ENCODE measurements at regions of chr17 and their contacts with region 1.

Region 1: DNA sequence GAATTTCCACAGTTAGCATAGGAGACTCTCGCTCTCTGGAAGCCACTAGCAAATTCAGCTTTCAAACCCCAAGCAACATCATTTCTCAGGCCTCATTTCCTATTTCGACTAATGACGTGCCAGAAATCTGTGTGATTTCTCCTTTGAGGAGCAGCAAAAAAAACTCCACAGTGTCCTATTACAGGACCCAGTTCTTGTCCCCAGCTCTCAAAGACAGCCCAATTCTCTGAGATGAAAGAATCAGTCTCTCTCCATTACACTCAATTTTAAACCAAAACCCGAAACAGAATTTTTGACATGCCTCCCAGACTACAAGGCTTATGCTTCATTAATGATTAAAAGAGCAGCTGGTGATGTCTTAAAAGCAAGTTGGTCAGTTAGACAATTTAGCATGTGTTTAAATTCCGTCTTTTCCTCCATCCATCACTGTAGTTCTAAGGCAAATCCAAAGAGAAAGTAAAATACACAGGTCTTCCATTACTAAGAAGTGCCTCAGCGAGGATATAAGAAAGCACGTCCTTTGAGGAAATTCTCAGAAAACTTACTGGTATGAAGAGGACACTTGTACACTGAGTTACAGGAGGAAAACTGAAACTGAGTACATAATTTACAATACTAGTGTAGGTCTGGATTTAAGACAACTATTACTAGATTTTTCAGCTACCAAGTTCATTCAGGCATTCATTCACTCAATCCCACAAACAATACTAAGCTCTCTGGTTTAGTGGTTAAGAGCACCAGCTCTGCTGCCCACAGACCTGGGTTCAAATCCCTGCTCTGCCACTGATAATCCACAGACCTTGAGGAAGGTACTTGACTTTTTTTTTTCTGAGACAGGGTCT is 12.5 kb downstream of the TOM1L2 start:
- DNase-seq: no peak
- ATAC-seq: no peak
- H3K4me3 Mint-ChIP-seq: peak overlapping the region; percentile 63
- H3K27ac Mint-ChIP-seq: peak overlapping the region; percentile 83
- H3K4me1 Mint-ChIP-seq: peaks cover 44% of the 10 kb centered on the region
- H3K27me3 Mint-ChIP-seq: no peaks in the 10 kb centered on the region
- CTCF ChIP-seq: no peak

Region 2: DNA sequence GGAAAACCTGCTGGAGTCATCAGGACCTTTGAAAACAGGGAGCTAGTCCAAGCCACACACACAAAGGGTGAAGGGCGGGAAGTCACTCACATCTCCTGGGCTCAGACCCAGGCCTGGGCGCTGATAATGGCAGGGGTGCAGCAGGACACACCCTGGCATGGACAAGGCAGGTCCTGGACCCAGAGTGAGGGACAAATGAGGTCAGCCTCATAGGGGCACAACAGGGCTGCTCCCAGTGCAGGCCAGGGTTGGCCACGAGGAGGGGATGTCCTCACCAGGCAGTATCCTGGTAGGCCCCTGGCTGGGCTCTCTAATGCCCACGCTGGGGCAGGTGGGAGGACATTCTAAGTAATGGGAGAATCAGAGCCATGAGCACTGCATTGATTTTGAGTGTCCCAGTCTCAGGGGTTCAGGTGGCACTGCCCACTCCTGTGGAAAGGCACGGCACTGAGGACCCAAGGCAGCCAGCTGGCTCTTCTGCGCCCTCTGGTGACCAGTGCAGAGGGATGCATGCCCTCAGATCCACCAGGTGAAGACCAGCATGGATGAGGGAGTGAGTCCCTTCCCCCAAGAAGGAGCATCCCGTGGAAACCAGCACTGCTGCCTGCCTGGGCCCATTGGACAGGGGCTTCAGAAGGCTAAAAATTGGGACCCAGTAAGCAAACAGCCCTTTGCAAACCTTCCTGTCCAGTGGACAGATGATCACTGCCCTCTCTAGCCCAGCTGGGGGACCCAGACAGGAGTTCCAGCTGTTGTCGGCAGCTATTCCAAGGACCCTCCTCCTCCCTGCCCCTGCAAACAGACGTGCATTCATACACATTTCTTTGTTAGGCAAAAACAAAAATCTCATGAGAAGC is 99.6 kb before region 1 on chr17:
- CTCF ChIA-PET with region 1: no interaction called
- POLR2A ChIA-PET with region 1: no interaction called
- intact Hi-C with region 1: no loop called
- DNase-seq: peak; percentile 65
- ATAC-seq: peak; percentile 99
- H3K4me3 Mint-ChIP-seq: no peak overlapping the region
- H3K27ac Mint-ChIP-seq: no peak overlapping the region
- H3K4me1 Mint-ChIP-seq: no peaks in the 10 kb centered on the region
- H3K27me3 Mint-ChIP-seq: no peaks in the 10 kb centered on the region
- CTCF ChIP-seq: peak; percentile 84

Region 3: GRCh38 chr17:17935321-17936271 is 24.1 kb before region 1 on chr17:
- CTCF ChIA-PET with region 1: no interaction called
- POLR2A ChIA-PET with region 1: interaction called, 12 read pairs
- intact Hi-C with region 1: no loop called
- DNase-seq: no peak
- ATAC-seq: no peak
- H3K4me3 Mint-ChIP-seq: no peak overlapping the region
- H3K27ac Mint-ChIP-seq: no peak overlapping the region
- H3K4me1 Mint-ChIP-seq: peaks cover 8% of the 10 kb centered on the region
- H3K27me3 Mint-ChIP-seq: no peaks in the 10 kb centered on the region
- CTCF ChIP-seq: no peak

Measured in activated B cell treated with CpG ODN at 0.5 μM for 24 hours (primary cell).